OCI-LY7 (cell line): ENCODE measurements at regions of chr11 and their contacts with region 1.

Region 1: GRCh38 chr11:111777094-111778046 is 11.2 kb upstream of the PPP2R1B start:
- DNase-seq: peak; percentile 87
- H3K4me3 ChIP-seq: peak overlapping the region; percentile 32
- H3K27ac ChIP-seq: peak overlapping the region; percentile 71
- H3K4me1 ChIP-seq: peaks cover 29% of the 10 kb centered on the region
- CTCF ChIP-seq: peak; percentile 99

Region 2: DNA sequence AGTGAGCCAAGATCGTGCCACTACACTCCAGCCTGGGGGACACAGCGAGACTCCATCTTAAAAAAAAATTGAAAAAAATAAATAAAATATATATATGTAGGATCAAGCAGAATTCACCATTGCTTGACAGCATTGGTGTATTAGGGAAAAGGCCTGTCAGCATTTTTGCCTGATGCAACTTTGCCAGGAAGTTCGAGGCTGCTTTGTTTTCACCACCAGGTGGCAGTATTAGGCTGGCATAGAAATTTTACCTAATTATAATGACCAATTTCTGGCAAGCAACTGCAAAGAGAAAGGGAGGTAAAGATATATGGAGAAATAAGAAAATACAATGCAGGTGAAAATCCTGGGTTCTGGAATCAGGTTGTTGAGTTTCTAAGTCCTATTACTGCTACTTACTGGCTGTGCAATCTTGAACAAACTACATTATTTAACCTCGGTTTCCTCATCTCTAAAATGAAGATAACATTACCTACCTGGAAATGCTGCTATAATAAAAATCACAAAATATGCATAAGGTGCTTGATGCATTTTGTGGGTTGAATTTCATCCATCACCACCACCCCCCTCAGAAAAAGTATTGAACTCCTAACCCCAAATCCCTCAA is 212.2 kb before region 1 on chr11:
- CTCF ChIA-PET with region 1: interaction called, 3 read pairs
- POLR2A ChIA-PET with region 1: interaction called, 3 read pairs
- intact Hi-C with region 1: loop called (anchors 1 kb)
- DNase-seq: peak; percentile 83
- H3K4me3 ChIP-seq: no peak overlapping the region
- H3K27ac ChIP-seq: no peak overlapping the region
- H3K4me1 ChIP-seq: no peaks in the 10 kb centered on the region
- CTCF ChIP-seq: peak; percentile 93

Region 3: DNA sequence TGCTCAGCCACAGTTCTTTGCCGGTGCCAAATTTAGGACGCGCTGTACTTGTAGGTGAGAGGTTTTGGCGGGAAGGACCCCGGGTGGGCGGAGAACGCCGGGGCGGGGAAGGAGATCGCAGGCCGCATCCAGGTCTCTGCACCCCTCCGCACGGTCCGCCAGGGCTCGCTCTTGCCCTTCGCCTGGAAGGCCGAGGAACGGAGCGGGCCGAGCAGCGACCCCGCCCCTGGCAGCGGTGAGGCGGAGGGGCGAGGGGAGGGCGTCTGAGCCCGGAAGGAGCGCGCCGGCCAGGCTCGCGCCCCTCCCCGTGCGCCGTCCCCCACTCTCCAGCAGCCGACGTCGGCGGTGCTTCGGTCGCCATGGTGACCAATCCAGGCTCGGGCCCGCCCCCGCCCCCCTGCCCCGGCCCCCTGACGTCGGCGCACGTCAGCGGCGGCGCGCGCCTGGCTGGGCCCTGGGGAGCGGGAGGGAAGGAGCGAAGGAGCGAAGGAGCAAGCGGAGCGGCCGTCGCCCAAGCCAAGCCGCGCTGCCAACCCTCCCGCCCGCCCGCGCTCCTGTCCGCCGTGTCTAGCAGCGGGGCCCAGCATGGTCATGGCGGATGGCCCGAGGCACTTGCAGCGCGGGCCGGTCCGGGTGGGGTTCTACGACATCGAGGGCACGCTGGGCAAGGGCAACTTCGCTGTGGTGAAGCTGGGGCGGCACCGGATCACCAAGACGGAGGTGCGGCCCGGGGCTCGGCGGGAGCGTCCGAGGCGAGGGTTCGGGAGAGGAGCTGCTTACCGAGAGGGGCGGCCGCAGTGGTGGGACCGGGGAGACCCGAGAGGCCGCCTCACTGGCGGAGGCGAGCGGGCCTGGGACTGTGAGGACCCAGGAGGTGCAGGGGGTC is 175.1 kb before region 1 on chr11 and contains the start of gene SIK2:
- CTCF ChIA-PET with region 1: interaction called, 18 read pairs
- POLR2A ChIA-PET with region 1: interaction called, 11 read pairs
- intact Hi-C with region 1: loop called (anchors 1 kb)
- DNase-seq: peak; percentile 97
- H3K4me3 ChIP-seq: peak within 1 kb of the TSS; percentile 96
- H3K27ac ChIP-seq: peak within 1 kb of the TSS; percentile 72
- H3K4me1 ChIP-seq: peaks cover 30% of the 10 kb centered on the region
- CTCF ChIP-seq: peak; percentile 80
- total RNA-seq, gene SIK2: 8.5 and 9.8 TPM in 2 replicates

Region 4: DNA sequence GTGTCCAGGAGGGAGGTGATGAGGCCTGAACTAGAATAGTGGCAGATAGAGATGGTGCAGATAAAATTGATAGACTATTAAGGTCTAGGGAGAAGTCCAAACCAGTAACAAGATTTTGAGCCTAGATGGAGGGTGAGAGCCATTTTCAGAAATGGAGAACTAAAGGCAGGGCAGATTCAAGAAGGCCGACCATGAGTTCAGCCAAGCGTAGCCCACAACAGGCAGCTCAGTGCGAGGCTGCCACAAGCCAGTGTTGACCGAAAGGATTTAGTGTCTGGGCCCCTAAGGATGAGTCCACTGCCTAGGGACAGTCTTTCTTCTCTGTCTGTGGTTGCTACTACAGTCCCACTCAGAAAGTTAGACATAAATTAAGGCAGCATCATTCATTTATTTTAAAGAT is 62.8 kb before region 1 on chr11:
- CTCF ChIA-PET with region 1: no interaction called
- POLR2A ChIA-PET with region 1: no interaction called
- intact Hi-C with region 1: loop called (anchors 2 kb)
- DNase-seq: peak; percentile 20
- H3K4me3 ChIP-seq: no peak overlapping the region
- H3K27ac ChIP-seq: peak overlapping the region; percentile 56
- H3K4me1 ChIP-seq: peaks cover 27% of the 10 kb centered on the region
- CTCF ChIP-seq: no peak

Region 5: DNA sequence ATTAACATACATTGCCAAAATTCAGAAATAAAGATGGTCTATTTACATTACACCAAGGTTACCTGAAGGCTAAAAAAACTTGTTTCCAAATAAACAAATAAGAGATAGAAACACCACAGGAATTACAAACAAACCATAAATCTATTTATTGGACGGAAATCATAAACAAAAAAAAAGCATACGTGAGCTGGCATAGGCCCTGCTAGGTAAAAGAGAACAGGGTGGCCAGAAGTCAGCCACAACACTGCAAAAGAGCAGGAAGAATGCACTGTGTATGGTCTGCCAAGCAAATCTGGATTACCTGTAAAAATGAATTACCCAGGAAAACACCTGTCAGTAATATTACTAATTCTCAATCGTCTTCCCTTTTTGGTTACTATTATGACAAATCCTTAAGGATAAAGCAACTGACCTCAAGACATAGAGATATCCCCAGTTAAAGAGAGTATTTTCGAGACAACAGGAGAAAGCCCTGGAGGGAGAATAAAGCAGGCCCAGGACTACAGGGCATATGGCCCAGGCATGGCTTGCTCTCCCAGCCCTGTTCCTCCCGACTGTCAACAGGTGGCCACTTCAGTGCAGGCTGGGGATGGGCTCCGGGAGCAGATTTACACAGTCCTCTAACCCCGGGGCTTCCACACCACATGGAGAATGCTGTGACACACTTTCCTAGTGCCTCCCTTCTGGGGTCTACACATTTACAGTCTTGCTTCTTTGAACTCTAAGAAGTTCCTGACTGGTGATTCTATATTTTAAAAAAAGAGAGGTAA is 29.1 kb before region 1 on chr11:
- CTCF ChIA-PET with region 1: no interaction called
- POLR2A ChIA-PET with region 1: no interaction called
- intact Hi-C with region 1: no loop called
- DNase-seq: no peak
- H3K4me3 ChIP-seq: no peak overlapping the region
- H3K27ac ChIP-seq: no peak overlapping the region
- H3K4me1 ChIP-seq: no peaks in the 10 kb centered on the region
- CTCF ChIP-seq: no peak

Region 6: GRCh38 chr11:111841370-111842053 is 64.1 kb after region 1 on chr11:
- CTCF ChIA-PET with region 1: interaction called, 3 read pairs
- POLR2A ChIA-PET with region 1: interaction called, 4 read pairs
- intact Hi-C with region 1: loop called (anchors 1 kb)
- DNase-seq: peak; percentile 85
- H3K4me3 ChIP-seq: no peak overlapping the region
- H3K27ac ChIP-seq: no peak overlapping the region
- H3K4me1 ChIP-seq: no peaks in the 10 kb centered on the region
- CTCF ChIP-seq: peak; percentile 98

Region 7: GRCh38 chr11:111879637-111879960 is 102.2 kb after region 1 on chr11:
- CTCF ChIA-PET with region 1: no interaction called
- POLR2A ChIA-PET with region 1: no interaction called
- intact Hi-C with region 1: no loop called
- DNase-seq: no peak
- H3K4me3 ChIP-seq: peak overlapping the region; percentile 75
- H3K27ac ChIP-seq: peak overlapping the region; percentile 72
- H3K4me1 ChIP-seq: peaks cover 12% of the 10 kb centered on the region
- CTCF ChIP-seq: no peak